Right cardiac atrium (tissue), 5 donors: ENCODE measurements at regions of chr13 and their contacts with region 1.

Region 1: DNA sequence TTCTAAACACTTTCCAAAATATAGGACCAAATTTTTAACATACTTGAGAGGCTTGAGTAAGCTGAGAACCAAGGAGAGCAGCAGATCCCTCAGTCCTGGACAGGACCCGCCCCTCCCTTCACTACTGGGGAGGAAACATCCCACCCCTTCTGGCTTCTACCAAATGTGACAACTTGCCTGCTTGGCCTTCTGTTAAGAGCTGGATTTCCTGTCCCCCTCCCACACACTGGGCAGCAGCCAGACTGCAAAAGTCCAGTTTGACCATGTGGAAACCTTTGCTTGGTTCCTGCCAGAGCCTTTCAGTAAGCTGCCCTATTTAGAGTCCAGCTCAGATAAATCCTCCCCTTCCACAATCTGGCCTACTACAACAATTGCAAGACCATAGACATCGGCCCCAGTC is 84.3 kb downstream of the FGF14 start:
- DNase-seq: peak; percentile 94 to 96 (median 94)
- ATAC-seq: peak; percentile 97 to 99
- H3K4me3 ChIP-seq: no peak overlapping the region
- H3K27ac ChIP-seq: peak overlapping the region; percentile 90
- H3K4me1 ChIP-seq: peaks cover 12% of the 10 kb centered on the region
- H3K27me3 ChIP-seq: no peaks in the 10 kb centered on the region

Region 2: GRCh38 chr13:102394158-102395053 is 76.8 kb after region 1 on chr13:
- intact Hi-C with region 1: loop called in 1 of 4 experiments (anchors 10 kb)
- DNase-seq: peak; percentile 97 to 99 (median 98)
- ATAC-seq: peak; percentile 97
- H3K4me3 ChIP-seq: peak overlapping the region; percentile 75
- H3K27ac ChIP-seq: peak overlapping the region; percentile 38
- H3K4me1 ChIP-seq: no peaks in the 10 kb centered on the region
- H3K27me3 ChIP-seq: no peaks in the 10 kb centered on the region